ENCODE measurements at regions of chr11 and their contacts with region 1.

Region 1: GRCh38 chr11:46121724-46122477 is 647 bp upstream of the PHF21A start:
- DNase-seq: peak; percentile 76 to 86
- H3K4me3 ChIP-seq: peak overlapping the region; percentile 80 to 83
- H3K27ac ChIP-seq: peak overlapping the region; percentile 94 to 95
- H3K4me1 ChIP-seq: peaks cover 0 to 35% (median 11%) of the 10 kb centered on the region in 4 donors
- H3K27me3 ChIP-seq: no peaks in the 10 kb centered on the region
- CTCF ChIP-seq: no peak

Region 2: DNA sequence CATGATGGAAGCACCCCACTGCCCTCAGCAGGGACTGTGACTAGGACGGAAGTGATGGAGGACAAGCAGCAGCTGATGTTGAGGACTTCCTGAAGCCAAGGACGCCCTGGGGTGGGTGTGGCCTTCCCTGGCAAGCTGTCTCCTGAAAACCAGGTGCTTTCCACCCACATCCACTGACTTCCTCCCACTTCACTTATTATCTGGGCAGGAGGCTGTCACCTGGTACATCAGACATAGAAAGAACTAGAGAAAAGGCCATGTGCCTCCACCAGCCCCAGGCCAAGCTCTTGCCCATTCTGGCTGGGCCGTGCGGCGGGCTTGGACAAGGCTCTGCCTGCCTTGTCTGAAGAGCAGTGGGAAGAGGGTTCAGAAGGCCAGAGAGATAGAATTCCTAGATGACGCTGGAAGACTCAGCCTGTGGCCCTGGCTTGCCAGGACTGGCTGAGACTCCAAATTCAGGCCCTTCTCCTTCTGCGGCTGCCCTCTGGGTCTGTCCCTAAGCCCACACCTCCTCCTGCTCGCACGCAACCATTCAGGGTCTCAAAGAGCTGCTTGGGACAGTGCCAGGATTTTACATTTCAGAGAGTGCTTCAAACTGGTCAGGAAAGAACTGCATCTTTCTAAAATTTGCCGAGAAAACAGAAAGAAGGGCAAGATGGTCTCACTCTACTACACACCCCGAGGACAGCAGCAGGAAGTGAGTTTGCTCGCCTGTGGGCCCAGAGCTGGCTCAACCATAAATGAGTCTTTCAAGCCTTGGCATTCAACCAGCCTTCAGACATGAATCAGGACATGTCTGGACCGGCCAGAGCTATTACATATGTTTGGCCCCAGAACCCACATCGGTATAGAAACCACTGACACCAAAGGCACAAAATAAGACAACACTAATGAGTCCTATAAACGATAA is 565.2 kb after region 1 on chr11:
- intact Hi-C with region 1: loop called (anchors 5 kb)
- DNase-seq: no peak
- H3K4me3 ChIP-seq: no peak overlapping the region
- H3K27ac ChIP-seq: peak overlapping the region; percentile 64 to 66
- H3K4me1 ChIP-seq: peaks cover 5 to 52% (median 25%) of the 10 kb centered on the region in 4 donors
- H3K27me3 ChIP-seq: no peaks in the 10 kb centered on the region
- CTCF ChIP-seq: no peak